ENCODE measurements at regions of chr5 and their contacts with region 1.

Region 1: DNA sequence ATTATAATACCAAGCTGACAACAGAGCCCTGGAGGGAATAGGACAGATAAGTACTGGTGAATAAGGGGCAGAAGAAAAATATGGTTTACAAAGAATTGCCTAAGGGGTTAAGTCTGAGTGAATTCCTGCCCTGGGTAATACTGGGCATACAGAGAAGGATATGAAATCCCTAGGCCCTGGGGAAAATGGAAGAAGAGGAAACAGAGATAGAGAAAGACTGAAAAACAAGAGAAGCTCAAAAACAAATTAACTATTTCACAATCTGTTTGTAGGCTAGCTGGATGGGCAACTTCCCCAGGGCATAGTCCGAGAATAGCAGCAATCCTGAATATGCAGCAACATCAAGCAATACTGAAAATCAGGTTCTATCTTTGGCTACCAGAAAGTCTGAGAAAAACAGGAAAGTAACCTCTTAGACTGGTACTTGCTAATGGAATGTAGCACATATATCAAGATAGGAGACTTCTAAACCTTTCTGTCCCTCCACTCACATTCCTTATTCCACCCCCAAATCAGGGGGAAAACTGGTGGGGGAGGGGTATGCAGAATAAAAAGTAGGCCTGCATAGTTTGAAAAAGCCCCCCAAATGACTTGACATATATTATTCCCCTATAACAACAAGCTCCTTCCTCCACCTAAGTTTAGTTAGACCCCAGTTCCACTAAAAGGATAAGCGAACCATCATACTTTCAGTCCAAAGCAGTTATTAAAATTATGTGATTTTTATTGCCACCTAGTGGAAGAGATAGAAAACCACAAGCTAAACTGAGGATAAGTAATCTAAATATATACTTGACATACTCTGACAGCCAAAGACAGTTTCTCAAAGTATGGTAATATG is 20.6 kb downstream of the SLC38A9 start:
- DNase-seq: peak; percentile 65
- H3K4me3 ChIP-seq: no peak overlapping the region
- H3K27ac ChIP-seq: no peak overlapping the region
- H3K4me1 ChIP-seq: peaks cover 0 to 2% of the 10 kb centered on the region in 2 experiments; a peak in 3 of 4 replicates
- H3K27me3 ChIP-seq: no peaks in the 10 kb centered on the region
- CTCF ChIP-seq: peak; percentile 78
- EP300 ChIP-seq: no peak
- RAD21 ChIP-seq: peak; percentile 78

Region 2: GRCh38 chr5:55344392-55344992 is 347.0 kb before region 1 on chr5:
- CTCF ChIA-PET with region 1: interaction called, 23 read pairs
- POLR2A ChIA-PET with region 1: no interaction called
- DNase-seq: peak; percentile 34
- H3K4me3 ChIP-seq: no peak overlapping the region
- H3K27ac ChIP-seq: no peak overlapping the region; a peak in 1 of 4 replicates
- H3K4me1 ChIP-seq: no peaks in the 10 kb centered on the region
- H3K27me3 ChIP-seq: no peaks in the 10 kb centered on the region
- CTCF ChIP-seq: peak; percentile 96
- EP300 ChIP-seq: no peak
- RAD21 ChIP-seq: peak; percentile 75

Region 3: GRCh38 chr5:55407059-55407684 is 284.3 kb before region 1 on chr5:
- CTCF ChIA-PET with region 1: interaction called, 24 read pairs
- POLR2A ChIA-PET with region 1: no interaction called
- DNase-seq: peak; percentile 47
- H3K4me3 ChIP-seq: no peak overlapping the region
- H3K27ac ChIP-seq: no peak overlapping the region
- H3K4me1 ChIP-seq: no peaks in the 10 kb centered on the region; a peak in 1 of 4 replicates
- H3K27me3 ChIP-seq: no peaks in the 10 kb centered on the region
- CTCF ChIP-seq: peak; percentile 87
- EP300 ChIP-seq: no peak
- RAD21 ChIP-seq: peak; percentile 79

Region 4: GRCh38 chr5:55680353-55680752 is 11.1 kb before region 1 on chr5:
- CTCF ChIA-PET with region 1: interaction called, 15 read pairs
- POLR2A ChIA-PET with region 1: no interaction called
- DNase-seq: no peak
- H3K4me3 ChIP-seq: no peak overlapping the region
- H3K27ac ChIP-seq: peak overlapping the region in 1 of 2 experiments; percentile 3; a peak in 1 of 4 replicates
- H3K4me1 ChIP-seq: no peaks in the 10 kb centered on the region; a peak in 1 of 4 replicates
- H3K27me3 ChIP-seq: no peaks in the 10 kb centered on the region
- CTCF ChIP-seq: no peak
- EP300 ChIP-seq: no peak
- RAD21 ChIP-seq: no peak

Region 5: GRCh38 chr5:55701462-55702103 is 10.1 kb after region 1 on chr5:
- CTCF ChIA-PET with region 1: interaction called, 10 read pairs
- POLR2A ChIA-PET with region 1: no interaction called
- DNase-seq: no peak
- H3K4me3 ChIP-seq: no peak overlapping the region
- H3K27ac ChIP-seq: no peak overlapping the region
- H3K4me1 ChIP-seq: no peaks in the 10 kb centered on the region
- H3K27me3 ChIP-seq: no peaks in the 10 kb centered on the region
- CTCF ChIP-seq: no peak
- EP300 ChIP-seq: no peak
- RAD21 ChIP-seq: no peak

Region 6: DNA sequence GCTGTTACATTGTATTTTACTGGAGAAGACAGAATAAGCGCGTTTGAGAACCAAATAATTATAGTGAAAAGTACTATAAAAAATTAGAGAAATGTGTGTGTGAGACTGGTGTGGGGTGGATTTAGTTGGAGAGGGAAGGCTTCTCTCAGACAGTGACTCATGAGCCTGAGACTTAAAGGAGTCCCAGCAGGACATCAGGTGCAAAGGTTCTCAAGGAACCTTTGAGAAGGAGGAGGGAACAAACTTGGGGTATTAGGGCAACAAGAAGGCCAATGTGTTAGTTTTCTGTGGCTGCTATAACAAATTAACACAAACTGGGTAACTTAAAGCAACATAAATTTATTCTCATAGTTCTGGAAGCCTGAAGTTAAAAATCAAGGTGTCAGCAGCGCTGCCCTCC is 51.3 kb after region 1 on chr5:
- CTCF ChIA-PET with region 1: no interaction called
- POLR2A ChIA-PET with region 1: no interaction called
- DNase-seq: no peak
- H3K4me3 ChIP-seq: no peak overlapping the region
- H3K27ac ChIP-seq: no peak overlapping the region
- H3K4me1 ChIP-seq: no peaks in the 10 kb centered on the region
- H3K27me3 ChIP-seq: no peaks in the 10 kb centered on the region; the same call in 1 of the 2 replicates
- CTCF ChIP-seq: no peak
- EP300 ChIP-seq: no peak
- RAD21 ChIP-seq: no peak